GM12878 (cell line): ENCODE measurements at regions of chr12 and their contacts with region 1.

Region 1: GRCh38 chr12:113092607-113093408 is 36.3 kb downstream of the DTX1 start:
- DNase-seq: no peak
- ATAC-seq: peak; percentile 50
- H3K4me3 ChIP-seq: no peak overlapping the region
- H3K27ac ChIP-seq: no peak overlapping the region
- H3K4me1 ChIP-seq: peaks cover 31% of the 10 kb centered on the region
- H3K27me3 ChIP-seq: no peaks in the 10 kb centered on the region
- CTCF ChIP-seq: peak; percentile 48 to 54 (median 53); a peak in 5 of 6 replicates
- EP300 ChIP-seq: no peak
- POLR2A ChIP-seq: no peak
- RAD21 ChIP-seq: peak; percentile 69

Region 2: DNA sequence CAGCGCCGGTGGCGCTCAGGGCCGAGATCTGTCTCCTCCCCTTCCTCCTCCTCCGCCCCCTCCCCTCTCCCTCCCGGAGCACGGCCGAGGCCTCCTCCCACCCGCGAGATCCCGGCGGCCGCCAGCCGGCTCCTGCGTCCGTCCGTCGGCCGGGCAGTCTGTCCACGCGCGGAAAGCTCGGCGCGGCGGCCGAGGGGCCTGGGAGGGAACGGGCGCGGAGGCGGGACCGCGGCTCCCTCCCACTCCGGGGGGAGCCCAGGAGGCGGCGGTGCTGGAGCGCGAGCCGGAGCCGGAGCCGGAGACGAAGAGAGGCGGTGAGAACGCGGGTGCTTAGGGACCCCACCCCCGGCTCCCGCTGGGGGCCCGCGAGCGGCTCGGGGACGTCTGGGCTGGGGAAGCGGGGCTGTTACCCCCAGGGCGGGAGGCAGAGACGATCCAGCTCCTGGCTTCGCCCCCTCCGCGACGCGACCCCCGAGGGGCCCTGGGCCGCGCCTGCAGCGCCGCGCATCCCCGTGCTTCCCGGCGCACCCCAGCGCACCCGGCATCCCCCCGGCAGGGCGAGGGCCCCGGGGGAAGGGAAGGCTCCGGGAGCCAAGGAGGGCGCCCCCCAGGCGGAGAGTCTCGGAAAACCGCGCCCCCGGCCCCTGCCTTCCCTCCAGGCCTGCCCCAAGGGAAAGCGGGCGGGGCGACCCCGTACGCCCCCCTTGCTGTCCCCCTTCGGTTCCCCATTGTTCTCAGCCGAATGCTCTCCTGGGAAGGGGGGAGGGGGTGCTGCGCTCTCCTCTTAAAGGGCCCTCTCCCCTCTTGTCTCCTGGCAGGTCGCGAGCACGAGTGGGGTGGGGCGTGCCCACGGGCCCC is 35.9 kb before region 1 on chr12 and contains the start of gene DTX1:
- CTCF ChIA-PET with region 1: interaction called, 121 read pairs
- POLR2A ChIA-PET with region 1: interaction called, 18 read pairs
- RAD21 ChIA-PET with region 1: interaction called, 50 read pairs
- SMC1A ChIA-PET with region 1: interaction called, 416 read pairs
- in situ Hi-C with region 1: no loop called
- intact Hi-C with region 1: no loop called
- DNase-seq: no peak
- ATAC-seq: peak; percentile 57
- H3K4me3 ChIP-seq: peak within 1 kb of the TSS; percentile 62
- H3K27ac ChIP-seq: no peak within 1 kb of the TSS
- H3K4me1 ChIP-seq: peaks cover 7% of the 10 kb centered on the region
- H3K27me3 ChIP-seq: peaks cover 1 to 9% of the 10 kb centered on the region in 2 experiments; a peak in 3 of 4 replicates
- CTCF ChIP-seq: peak in 2 of 3 experiments; percentile 7 to 19; a peak in 2 of 6 replicates
- EP300 ChIP-seq: no peak
- POLR2A ChIP-seq: no peak
- RAD21 ChIP-seq: no peak
- polyA plus RNA-seq, gene DTX1: 0.13 to 0.32 TPM

Region 3: GRCh38 chr12:113065126-113066007 is 27.4 kb before region 1 on chr12:
- CTCF ChIA-PET with region 1: interaction called, 98 read pairs
- POLR2A ChIA-PET with region 1: interaction called, 41 read pairs
- RAD21 ChIA-PET with region 1: interaction called, 39 read pairs
- SMC1A ChIA-PET with region 1: interaction called, 416 read pairs
- in situ Hi-C with region 1: no loop called
- intact Hi-C with region 1: no loop called
- DNase-seq: no peak
- ATAC-seq: peak; percentile 5; the same call in 2 of the 3 replicates
- H3K4me3 ChIP-seq: no peak overlapping the region
- H3K27ac ChIP-seq: no peak overlapping the region
- H3K4me1 ChIP-seq: peaks cover 39% of the 10 kb centered on the region
- H3K27me3 ChIP-seq: peaks cover 0 to 4% of the 10 kb centered on the region in 2 experiments; a peak in 1 of 4 replicates
- CTCF ChIP-seq: no peak
- EP300 ChIP-seq: no peak
- POLR2A ChIP-seq: no peak
- RAD21 ChIP-seq: no peak